ENCODE measurements at regions of chr17 and their contacts with region 1.

Region 1: DNA sequence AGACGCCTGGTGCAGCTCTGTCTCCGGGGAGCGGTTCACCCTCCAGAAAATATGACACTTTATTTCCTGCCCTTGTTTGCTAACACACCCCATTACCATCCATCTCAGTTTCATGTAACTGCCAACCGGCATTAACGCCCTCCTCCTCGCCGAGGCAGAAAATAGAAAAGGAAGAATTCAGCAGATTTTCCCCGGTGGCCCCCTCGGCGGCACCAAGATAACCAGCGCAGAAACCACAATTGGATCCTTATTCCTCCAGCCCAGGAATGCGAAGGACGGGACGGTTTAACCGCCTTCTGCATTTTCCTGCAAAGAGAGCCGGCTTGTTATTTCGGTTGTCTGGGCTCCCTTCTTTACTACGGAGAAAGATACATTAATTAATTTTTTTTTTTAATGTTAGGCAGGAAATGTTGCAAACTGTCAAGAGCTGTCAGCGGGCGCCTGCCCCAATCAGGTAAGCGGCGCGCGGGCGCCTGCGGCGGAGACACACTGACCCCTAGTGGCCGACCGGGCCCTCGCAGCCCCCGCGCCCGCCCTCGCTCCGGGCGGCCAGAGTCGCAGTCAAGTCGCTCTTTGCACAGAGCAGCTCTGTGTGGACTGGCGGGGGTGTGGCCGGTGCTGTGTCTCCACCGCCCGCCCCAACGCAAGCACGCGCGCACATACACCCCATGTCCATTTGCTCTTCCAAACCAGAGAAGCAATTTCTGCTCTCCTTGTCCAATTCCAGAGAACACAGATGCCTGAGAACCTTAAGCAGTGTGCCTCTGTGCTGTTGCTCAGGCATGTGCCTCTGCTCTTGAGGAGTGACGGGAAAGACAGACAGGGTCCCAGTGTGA is 53.6 kb downstream of the C17orf67 start:
- DNase-seq: peak; percentile 93
- H3K4me3 ChIP-seq: peak overlapping the region; percentile 45 to 61
- H3K27ac ChIP-seq: no peak overlapping the region
- H3K4me1 ChIP-seq: peaks cover 4 to 8% of the 10 kb centered on the region in 2 experiments; a peak in 2 of 4 replicates
- H3K27me3 ChIP-seq: no peaks in the 10 kb centered on the region
- CTCF ChIP-seq: peak; percentile 100
- EP300 ChIP-seq: 0 out of 4 replicates have a peak, but pooled peaks of 1 of the 2 experiments have one; percentile 34
- RAD21 ChIP-seq: peak; percentile 85

Region 2: DNA sequence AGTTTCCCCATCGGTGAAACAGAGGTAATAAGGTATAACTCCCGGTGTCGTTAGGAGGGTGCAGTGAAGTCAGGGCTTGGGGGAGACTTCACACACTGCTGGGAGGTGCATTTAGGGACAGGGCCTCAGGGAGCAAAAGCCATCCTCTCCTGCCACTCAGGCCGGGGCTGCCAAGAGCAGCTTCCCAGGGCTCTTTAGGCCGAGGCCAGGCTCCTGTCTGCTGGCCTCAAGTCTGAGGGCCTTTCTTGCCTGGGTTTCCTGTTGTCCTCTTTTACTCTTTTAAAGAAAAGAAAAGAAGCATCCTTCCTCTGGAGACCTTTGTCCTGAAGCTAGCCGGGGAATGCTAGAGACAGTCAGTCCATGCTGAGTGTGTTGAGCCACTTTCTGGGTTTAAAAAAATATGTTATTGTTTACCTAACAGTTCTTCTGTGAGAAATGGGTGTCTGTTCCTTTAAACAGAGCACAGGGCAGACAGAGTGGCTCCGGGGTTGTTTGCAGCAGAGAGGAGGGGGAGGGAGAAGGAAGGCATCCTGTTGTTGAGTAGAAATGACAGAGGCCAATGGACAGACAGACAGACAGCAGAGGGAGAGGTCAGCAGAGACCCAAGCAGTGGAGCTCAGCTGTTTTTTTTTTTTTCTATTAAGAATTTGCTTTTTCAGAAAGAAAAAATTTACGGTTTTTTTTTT is 25.4 kb before region 1 on chr17:
- CTCF ChIA-PET with region 1: interaction called, 24 read pairs
- POLR2A ChIA-PET with region 1: no interaction called
- DNase-seq: peak; percentile 60
- H3K4me3 ChIP-seq: no peak overlapping the region
- H3K27ac ChIP-seq: peak overlapping the region; percentile 2 to 73; a peak in 3 of 4 replicates
- H3K4me1 ChIP-seq: peaks cover 3 to 18% of the 10 kb centered on the region in 2 experiments; a peak in 3 of 4 replicates
- H3K27me3 ChIP-seq: no peaks in the 10 kb centered on the region
- CTCF ChIP-seq: no peak
- EP300 ChIP-seq: peak in 1 of 2 experiments; percentile 37; a peak in 1 of 4 replicates
- RAD21 ChIP-seq: no peak

Region 3: GRCh38 chr17:56762988-56763387 is 17.1 kb before region 1 on chr17:
- CTCF ChIA-PET with region 1: interaction called, 63 read pairs
- POLR2A ChIA-PET with region 1: no interaction called
- DNase-seq: no peak
- H3K4me3 ChIP-seq: no peak overlapping the region
- H3K27ac ChIP-seq: no peak overlapping the region
- H3K4me1 ChIP-seq: no peaks in the 10 kb centered on the region
- H3K27me3 ChIP-seq: no peaks in the 10 kb centered on the region; the same call in 1 of the 2 replicates
- CTCF ChIP-seq: no peak
- EP300 ChIP-seq: no peak
- RAD21 ChIP-seq: no peak

Region 4: GRCh38 chr17:56792828-56793227 is 12.7 kb after region 1 on chr17:
- CTCF ChIA-PET with region 1: interaction called, 24 read pairs
- POLR2A ChIA-PET with region 1: no interaction called
- DNase-seq: no peak
- H3K4me3 ChIP-seq: no peak overlapping the region
- H3K27ac ChIP-seq: no peak overlapping the region
- H3K4me1 ChIP-seq: no peaks in the 10 kb centered on the region
- H3K27me3 ChIP-seq: no peaks in the 10 kb centered on the region
- CTCF ChIP-seq: no peak
- EP300 ChIP-seq: no peak
- RAD21 ChIP-seq: no peak

Region 5: GRCh38 chr17:56798908-56799307 is 18.8 kb after region 1 on chr17:
- CTCF ChIA-PET with region 1: interaction called, 13 read pairs
- POLR2A ChIA-PET with region 1: no interaction called
- DNase-seq: no peak
- H3K4me3 ChIP-seq: no peak overlapping the region
- H3K27ac ChIP-seq: no peak overlapping the region
- H3K4me1 ChIP-seq: no peaks in the 10 kb centered on the region
- H3K27me3 ChIP-seq: no peaks in the 10 kb centered on the region
- CTCF ChIP-seq: no peak
- EP300 ChIP-seq: no peak
- RAD21 ChIP-seq: no peak